ENCODE measurements at regions of chr6 and their contacts with region 1.

Region 1: DNA sequence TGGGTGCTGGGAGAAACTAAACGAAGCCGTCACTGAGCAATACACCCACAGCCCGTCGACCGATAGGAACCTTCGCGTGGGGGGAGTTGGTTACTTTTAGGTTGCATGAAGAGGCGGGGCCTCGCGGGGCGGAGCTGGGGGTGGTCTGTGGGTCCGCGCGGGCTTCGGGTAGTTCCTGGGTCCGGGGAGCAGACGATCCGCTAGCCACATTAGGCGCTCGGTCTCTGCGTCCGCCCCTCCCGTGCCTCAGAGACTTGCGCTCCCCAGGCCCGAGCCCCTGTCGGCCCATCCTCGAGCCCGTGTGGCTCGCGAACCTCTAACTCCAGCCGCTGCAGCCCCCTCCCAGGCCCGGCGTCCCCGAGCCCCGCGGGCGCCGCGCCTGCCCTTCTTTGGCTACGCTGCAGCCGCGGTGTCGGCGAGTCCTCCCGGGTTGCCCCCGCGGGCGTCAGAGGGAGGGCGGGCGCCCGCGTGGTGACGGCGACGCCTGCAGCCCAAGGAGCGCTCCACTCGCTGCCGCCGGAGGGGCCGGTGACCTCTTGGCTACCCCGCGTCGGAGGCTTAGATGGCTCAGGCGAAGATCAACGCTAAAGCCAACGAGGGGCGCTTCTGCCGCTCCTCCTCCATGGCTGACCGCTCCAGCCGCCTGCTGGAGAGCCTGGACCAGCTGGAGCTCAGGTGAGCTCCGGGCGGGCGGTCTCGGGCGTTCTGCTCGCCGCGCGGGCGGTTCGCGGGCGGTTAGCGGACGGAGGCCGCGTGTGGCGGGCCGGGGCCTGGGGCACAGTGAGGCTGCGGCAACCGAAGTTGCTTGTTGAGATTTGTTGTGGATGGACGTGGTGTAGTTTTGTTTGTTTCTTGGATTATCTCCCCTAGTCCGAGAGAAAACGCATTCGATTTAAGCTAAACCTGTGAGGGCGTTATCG is at the start of gene BAG2:
- DNase-seq: peak; percentile 95
- ATAC-seq: peak; percentile 97
- total RNA-seq, gene BAG2: 15.4 TPM

Region 2: GRCh38 chr6:57097596-57097995 is 74.8 kb before region 1 on chr6:
- intact Hi-C with region 1: loop called (anchors 5 kb)
- DNase-seq: no peak
- ATAC-seq: no peak

Region 3: GRCh38 chr6:57190140-57190539 is 17.7 kb after region 1 on chr6:
- intact Hi-C with region 1: no loop called
- DNase-seq: no peak
- ATAC-seq: no peak

Region 4: GRCh38 chr6:57221936-57222742 is 49.7 kb after region 1 on chr6 and contains the start of gene RAB23:
- intact Hi-C with region 1: loop called (anchors 2 kb)
- DNase-seq: peak; percentile 91
- ATAC-seq: peak; percentile 99
- total RNA-seq, gene RAB23: 12.0 TPM